Activated T-helper 2 cell treated with anti-CD3 and anti-CD28 coated beads, Interferon-gamma antibody, Interleukin-2, Interleukin-4, amounts not matched to agents 10 μg/mL and 5 μg/mL and 100 μg/mL, durations not matched to agents 14 hours and 24 hours and 36 hours (primary cell): ENCODE measurements at regions of chr13 and their contacts with region 1.

Region 1: GRCh38 chr13:110915057-110915873 is at the start of gene ANKRD10:
- DNase-seq: peak; percentile 97
- H3K4me3 Mint-ChIP-seq: peak within 1 kb of the TSS; percentile 90
- H3K27ac Mint-ChIP-seq: peak within 1 kb of the TSS; percentile 96
- H3K4me1 Mint-ChIP-seq: peaks cover 37% of the 10 kb centered on the region
- H3K27me3 Mint-ChIP-seq: no peaks in the 10 kb centered on the region
- total RNA-seq, gene ANKRD10: 111 and 120 TPM in 2 replicates

Region 2: GRCh38 chr13:110826861-110827672 is 88.2 kb before region 1 on chr13:
- intact Hi-C with region 1: no loop called
- DNase-seq: no peak
- H3K4me3 Mint-ChIP-seq: no peak overlapping the region
- H3K27ac Mint-ChIP-seq: no peak overlapping the region
- H3K4me1 Mint-ChIP-seq: no peaks in the 10 kb centered on the region
- H3K27me3 Mint-ChIP-seq: no peaks in the 10 kb centered on the region

Region 3: GRCh38 chr13:110944121-110944967 is 29.1 kb after region 1 on chr13:
- intact Hi-C with region 1: loop called (anchors 1 kb)
- DNase-seq: no peak
- H3K4me3 Mint-ChIP-seq: no peak overlapping the region
- H3K27ac Mint-ChIP-seq: no peak overlapping the region
- H3K4me1 Mint-ChIP-seq: peaks cover 32% of the 10 kb centered on the region
- H3K27me3 Mint-ChIP-seq: no peaks in the 10 kb centered on the region

Region 4: GRCh38 chr13:110965038-110965754 is 49.9 kb after region 1 on chr13:
- intact Hi-C with region 1: loop called (anchors 1 kb)
- DNase-seq: peak; percentile 46
- H3K4me3 Mint-ChIP-seq: peak overlapping the region; percentile 26
- H3K27ac Mint-ChIP-seq: peak overlapping the region; percentile 83
- H3K4me1 Mint-ChIP-seq: peaks cover 21% of the 10 kb centered on the region
- H3K27me3 Mint-ChIP-seq: no peaks in the 10 kb centered on the region

Region 5: DNA sequence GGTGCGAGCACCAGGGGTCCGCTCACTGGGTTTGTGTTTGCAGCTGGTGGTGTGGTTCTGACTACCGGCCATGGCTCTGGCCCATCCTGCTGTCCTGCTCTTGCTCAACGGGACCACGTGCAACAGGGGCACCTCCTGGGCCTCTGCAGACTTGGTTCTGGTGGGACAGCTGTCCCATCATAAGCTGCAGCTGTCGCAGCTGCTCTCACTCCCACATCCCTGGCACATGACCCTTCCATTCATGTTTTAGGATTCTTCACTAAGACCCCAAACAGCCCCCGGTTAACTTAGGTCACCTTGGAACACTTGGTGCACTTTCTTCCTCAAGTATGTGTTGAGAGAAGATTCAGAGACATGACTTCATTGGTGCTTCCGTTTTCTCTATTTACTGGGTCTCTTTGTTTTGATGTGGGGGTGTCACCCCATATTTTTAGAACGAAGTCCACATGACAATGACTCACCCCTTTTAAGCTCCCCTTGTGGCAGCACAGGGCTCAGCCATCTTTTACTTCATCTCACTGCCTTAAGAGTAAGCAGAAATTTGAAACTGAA is 131.4 kb after region 1 on chr13:
- intact Hi-C with region 1: loop called (anchors 5 kb)
- DNase-seq: no peak
- H3K4me3 Mint-ChIP-seq: no peak overlapping the region
- H3K27ac Mint-ChIP-seq: no peak overlapping the region
- H3K4me1 Mint-ChIP-seq: peaks cover 6% of the 10 kb centered on the region
- H3K27me3 Mint-ChIP-seq: peaks cover 7% of the 10 kb centered on the region

Region 6: DNA sequence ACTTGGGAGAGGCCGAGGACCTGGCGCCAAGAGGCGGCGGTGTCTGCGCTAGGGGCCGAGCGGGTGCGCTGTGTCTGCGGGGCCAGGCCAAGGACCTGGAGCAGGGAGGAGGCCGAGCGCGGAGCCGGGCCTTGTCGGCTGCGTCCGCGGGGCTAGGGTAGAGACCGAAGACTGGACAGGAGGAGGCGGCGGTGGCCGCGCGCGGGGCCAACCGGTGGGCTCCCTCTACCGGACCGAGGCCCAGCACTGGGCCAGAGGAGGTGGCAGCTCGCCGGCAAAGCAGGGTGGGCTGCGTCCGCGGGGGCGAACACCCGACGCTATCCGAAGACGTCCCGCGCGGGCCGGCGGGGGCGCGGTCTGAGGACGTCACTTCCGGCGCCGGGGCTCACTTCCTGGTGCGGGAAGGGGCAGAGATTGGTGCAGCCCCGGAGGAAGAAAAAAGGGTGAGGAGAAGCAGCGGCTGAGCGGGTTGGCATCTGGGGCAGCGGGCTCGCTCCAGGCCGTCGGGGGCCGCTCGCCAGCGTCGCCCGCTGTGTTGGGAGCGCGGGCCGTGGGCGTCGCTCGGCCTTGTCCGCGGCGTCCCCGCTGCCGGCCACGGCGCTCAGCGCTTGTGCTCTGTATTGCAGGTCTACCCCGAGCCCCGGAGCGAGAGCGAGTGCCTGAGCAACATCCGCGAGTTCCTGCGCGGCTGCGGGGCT is 238.2 kb after region 1 on chr13:
- intact Hi-C with region 1: loop called (anchors 1 kb)
- DNase-seq: peak; percentile 91
- H3K4me3 Mint-ChIP-seq: peak overlapping the region; percentile 91
- H3K27ac Mint-ChIP-seq: peak overlapping the region; percentile 95
- H3K4me1 Mint-ChIP-seq: peaks cover 25% of the 10 kb centered on the region
- H3K27me3 Mint-ChIP-seq: peaks cover 30% of the 10 kb centered on the region

Region 7: DNA sequence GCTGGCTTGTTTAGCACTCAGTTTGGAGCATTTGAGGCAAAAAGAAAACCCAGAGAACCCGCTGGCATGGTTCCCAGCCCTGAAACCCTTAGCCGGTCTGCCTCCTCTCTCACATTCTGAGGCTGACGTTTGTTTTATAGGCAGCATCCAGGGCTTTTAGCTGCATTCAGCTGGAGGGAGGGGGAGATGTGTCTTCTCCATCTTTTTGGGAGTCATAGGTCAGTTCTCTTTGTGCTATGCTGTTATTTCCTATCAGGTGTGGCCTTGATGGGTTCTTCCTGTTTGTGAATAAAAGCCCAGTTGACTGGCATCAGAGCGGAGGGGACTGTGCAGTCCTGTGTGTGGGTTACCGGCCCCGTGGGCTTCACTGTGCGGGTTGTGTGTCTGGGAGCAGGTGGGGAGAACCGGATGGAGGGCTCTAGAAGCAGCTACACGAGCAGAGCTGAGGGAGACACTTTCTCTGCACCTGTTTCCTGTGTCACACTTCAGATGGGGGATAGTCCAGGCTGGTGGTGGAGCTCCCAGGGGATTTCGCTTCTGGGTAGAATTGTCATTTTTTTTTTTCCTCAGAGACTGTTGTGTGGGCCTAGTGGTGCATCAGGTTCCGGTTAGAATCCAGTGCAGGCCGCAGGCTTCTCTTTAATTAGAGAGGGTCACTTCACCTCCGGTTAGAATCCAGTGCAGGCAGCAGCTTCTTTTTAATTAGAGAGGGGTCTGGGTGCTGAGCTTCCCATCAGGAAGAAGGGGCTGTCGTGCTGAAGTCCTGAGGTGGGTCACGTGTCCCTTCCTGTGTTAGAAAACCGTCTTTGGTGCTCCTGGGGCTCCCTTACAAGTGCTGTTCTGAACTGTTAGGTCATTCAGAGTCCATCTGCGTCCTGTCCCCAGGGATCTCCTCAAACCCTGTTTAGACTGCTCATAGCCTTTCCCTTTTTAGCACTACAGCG is 269.5 kb after region 1 on chr13:
- intact Hi-C with region 1: loop called (anchors 10 kb)
- DNase-seq: no peak
- H3K4me3 Mint-ChIP-seq: peak overlapping the region; percentile 37
- H3K27ac Mint-ChIP-seq: peak overlapping the region; percentile 50
- H3K4me1 Mint-ChIP-seq: peaks cover 82% of the 10 kb centered on the region
- H3K27me3 Mint-ChIP-seq: no peaks in the 10 kb centered on the region